CD8-positive, alpha-beta T cell (primary cell): ENCODE measurements at regions of chr2 and their contacts with region 1.

Region 1: DNA sequence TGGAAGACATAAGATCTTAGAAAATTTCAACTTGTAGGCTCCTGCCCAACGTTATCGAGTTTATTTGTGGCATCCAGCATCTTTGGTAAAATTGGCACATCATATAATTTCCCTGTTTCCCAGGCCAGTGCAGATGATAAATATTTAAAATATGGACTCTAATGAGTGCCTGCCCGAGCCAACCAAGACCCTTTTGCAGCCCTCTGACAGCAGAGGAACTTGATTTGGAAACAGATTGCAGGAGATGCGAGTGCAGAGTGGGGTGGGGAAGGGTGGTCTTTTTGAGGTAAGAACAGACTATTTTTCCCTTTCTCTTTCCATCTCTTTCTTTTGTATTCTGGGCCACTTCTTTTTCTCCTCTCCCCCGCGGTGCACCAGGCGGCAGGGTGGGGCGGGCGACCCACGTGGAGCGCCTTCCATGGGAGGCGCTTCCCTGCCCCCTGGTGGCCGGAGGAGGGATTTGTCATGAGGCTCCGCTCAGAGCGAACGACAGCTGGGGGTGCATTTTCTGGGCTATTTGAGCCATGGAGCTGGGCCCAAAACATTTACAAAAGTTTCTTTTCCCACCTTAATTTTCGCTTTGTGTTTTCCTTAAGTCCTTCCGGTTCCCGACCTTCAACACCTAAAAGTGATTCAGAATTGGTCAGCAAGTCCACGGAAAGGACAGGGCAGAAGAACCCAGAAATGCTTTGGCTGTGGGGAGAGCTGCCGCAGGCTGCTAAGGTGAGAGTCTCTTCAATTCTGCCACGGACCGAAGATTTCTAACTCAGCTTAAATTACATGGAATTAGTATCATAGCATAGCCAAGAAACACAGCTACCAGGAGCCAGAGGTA is 32.7 kb downstream of the LPIN1 start:
- DNase-seq: peak; percentile 70 to 93 (median 88)
- ATAC-seq: peak; percentile 96
- H3K4me3 ChIP-seq: peak overlapping the region in 1 of 2 experiments; percentile 24
- H3K4me3 Mint-ChIP-seq: peak overlapping the region; percentile 23
- H3K27ac ChIP-seq: peak overlapping the region in 1 of 2 experiments; percentile 40
- H3K27ac Mint-ChIP-seq: peak overlapping the region; percentile 6
- H3K4me1 ChIP-seq: peaks cover 21% of the 10 kb centered on the region
- H3K4me1 Mint-ChIP-seq: peaks cover 37% of the 10 kb centered on the region
- H3K27me3 ChIP-seq: no peaks in the 10 kb centered on the region
- H3K27me3 Mint-ChIP-seq: no peaks in the 10 kb centered on the region
- CTCF ChIP-seq: peak; percentile 93

Region 2: GRCh38 chr2:11477994-11478393 is 301.1 kb before region 1 on chr2:
- CTCF ChIA-PET with region 1: interaction called, 6 read pairs
- POLR2A ChIA-PET with region 1: no interaction called
- intact Hi-C with region 1: loop called (anchors 1 kb)
- DNase-seq: peak; percentile 56 to 87 (median 80)
- ATAC-seq: peak; percentile 59
- H3K4me3 ChIP-seq: no peak overlapping the region
- H3K4me3 Mint-ChIP-seq: no peak overlapping the region
- H3K27ac ChIP-seq: no peak overlapping the region
- H3K27ac Mint-ChIP-seq: no peak overlapping the region
- H3K4me1 ChIP-seq: no peaks in the 10 kb centered on the region
- H3K4me1 Mint-ChIP-seq: peaks cover 2% of the 10 kb centered on the region
- H3K27me3 ChIP-seq: peaks cover 5 to 14% of the 10 kb centered on the region in 2 experiments
- H3K27me3 Mint-ChIP-seq: peaks cover 24% of the 10 kb centered on the region
- CTCF ChIP-seq: peak; percentile 89

Region 3: GRCh38 chr2:11703700-11704099 is 75.4 kb before region 1 on chr2:
- CTCF ChIA-PET with region 1: interaction called, 438 read pairs
- POLR2A ChIA-PET with region 1: no interaction called
- intact Hi-C with region 1: no loop called
- DNase-seq: no peak
- ATAC-seq: no peak
- H3K4me3 ChIP-seq: no peak overlapping the region
- H3K4me3 Mint-ChIP-seq: no peak overlapping the region
- H3K27ac ChIP-seq: no peak overlapping the region
- H3K27ac Mint-ChIP-seq: no peak overlapping the region
- H3K4me1 ChIP-seq: no peaks in the 10 kb centered on the region
- H3K4me1 Mint-ChIP-seq: no peaks in the 10 kb centered on the region
- H3K27me3 ChIP-seq: no peaks in the 10 kb centered on the region
- H3K27me3 Mint-ChIP-seq: no peaks in the 10 kb centered on the region
- CTCF ChIP-seq: no peak

Region 4: DNA sequence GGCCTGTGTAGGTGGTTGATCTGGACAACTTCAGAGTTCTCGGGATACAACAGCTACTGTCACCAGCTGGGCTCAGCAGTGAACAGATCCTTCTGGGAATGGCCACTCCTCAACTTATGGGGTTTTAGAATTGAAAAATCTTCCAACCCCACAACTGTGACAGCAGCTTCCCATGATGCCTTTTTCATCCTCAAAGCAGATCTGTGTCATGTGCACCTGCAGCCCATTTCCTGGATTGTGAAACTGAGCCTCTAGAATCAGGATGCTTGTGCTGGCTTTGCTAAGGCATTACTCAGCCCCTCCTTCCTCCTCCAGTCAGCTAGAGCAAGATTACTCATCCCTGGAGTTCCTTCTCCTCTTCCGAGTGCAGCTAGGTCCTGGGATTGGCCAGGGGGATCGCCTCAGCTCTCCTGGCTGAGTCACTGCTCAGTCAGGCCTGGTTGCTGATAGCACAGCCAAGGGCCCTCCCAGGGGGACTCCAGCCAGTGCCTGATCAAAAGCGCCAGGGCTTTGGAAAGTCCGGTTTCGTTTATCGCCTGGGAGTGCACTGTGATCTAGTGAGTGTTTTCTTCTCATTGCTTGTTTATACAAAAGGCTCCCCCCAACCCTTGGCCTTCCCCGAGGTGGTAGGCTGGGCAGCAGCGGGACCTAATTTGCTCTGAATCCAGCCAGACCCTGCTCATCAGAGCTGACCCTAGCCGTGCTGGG is 35.1 kb before region 1 on chr2:
- CTCF ChIA-PET with region 1: interaction called, 45 read pairs
- POLR2A ChIA-PET with region 1: interaction called, 9 read pairs
- intact Hi-C with region 1: loop called (anchors 1 kb)
- DNase-seq: peak in 8 of 9 experiments; percentile 48 to 86 (median 68)
- ATAC-seq: peak; percentile 25
- H3K4me3 ChIP-seq: peak overlapping the region in 1 of 2 experiments; percentile 9
- H3K4me3 Mint-ChIP-seq: peak overlapping the region; percentile 54
- H3K27ac ChIP-seq: peak overlapping the region in 1 of 2 experiments; percentile 20
- H3K27ac Mint-ChIP-seq: peak overlapping the region; percentile 56
- H3K4me1 ChIP-seq: peaks cover 41% of the 10 kb centered on the region
- H3K4me1 Mint-ChIP-seq: peaks cover 46% of the 10 kb centered on the region
- H3K27me3 ChIP-seq: no peaks in the 10 kb centered on the region
- H3K27me3 Mint-ChIP-seq: no peaks in the 10 kb centered on the region
- CTCF ChIP-seq: no peak

Region 5: DNA sequence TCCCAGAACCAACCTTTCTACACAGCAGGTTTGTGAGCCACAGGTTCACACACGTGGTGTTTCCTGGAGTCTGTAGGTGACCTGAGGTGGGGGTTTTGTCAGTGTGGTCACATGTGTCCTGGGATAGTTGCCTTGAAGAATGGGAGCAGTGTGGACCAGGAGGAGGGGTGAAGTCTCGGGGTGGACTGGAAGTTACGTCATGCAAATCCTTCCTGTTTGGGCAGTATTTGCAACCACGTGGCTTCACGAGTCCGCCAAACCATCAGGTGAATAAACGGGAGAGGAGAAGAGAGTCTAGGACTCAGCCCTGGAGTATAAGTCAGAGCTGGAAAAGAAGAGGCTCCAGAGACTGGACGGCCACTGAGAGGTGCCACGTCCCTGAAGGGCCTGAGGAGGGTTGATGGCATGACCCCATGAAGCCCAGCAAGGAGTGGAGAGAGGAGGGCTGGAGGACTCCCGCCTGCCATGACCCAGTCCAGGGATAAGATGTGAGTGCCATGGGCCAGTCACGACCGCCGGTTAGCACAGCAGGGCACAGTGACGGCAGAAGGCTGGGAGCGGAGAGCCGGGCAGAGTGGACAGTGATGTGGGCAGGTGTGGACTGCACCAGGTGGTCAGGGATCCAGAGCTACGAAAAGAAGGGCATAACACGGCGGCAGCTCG is 16.2 kb before region 1 on chr2:
- CTCF ChIA-PET with region 1: interaction called, 10 read pairs
- POLR2A ChIA-PET with region 1: interaction called, 3 read pairs
- intact Hi-C with region 1: no loop called
- DNase-seq: no peak
- ATAC-seq: no peak
- H3K4me3 ChIP-seq: no peak overlapping the region
- H3K4me3 Mint-ChIP-seq: no peak overlapping the region
- H3K27ac ChIP-seq: no peak overlapping the region
- H3K27ac Mint-ChIP-seq: peak overlapping the region; percentile 45
- H3K4me1 ChIP-seq: peaks cover 17% of the 10 kb centered on the region
- H3K4me1 Mint-ChIP-seq: peaks cover 41% of the 10 kb centered on the region
- H3K27me3 ChIP-seq: no peaks in the 10 kb centered on the region
- H3K27me3 Mint-ChIP-seq: no peaks in the 10 kb centered on the region
- CTCF ChIP-seq: no peak